ENCODE measurements at regions of chr14 and their contacts with region 1.

Region 1: DNA sequence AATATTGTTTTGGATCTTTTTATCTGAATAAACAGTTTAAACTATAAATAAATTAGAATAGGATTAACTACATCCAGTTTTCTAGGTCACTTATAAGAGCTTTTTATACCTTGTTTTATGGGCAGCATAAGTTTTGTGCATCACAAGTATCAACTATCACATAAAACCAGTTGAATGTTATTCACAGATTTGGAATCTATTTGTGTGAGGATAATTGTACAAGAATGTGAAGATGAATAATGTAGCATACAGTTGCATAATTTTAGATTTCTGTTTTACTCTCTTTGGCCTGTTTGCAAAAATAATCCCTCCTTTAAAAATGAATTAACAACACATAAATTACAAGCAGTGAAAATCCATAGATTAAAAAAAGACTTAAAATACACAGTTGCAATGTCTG is 88.8 kb downstream of the SCFD1 start:
- DNase-seq: no peak
- ATAC-seq: no peak
- H3K4me3 ChIP-seq: no peak overlapping the region
- H3K4me3 Mint-ChIP-seq: no peak overlapping the region
- H3K27ac ChIP-seq: no peak overlapping the region
- H3K27ac Mint-ChIP-seq: no peak overlapping the region
- H3K4me1 ChIP-seq: no peaks in the 10 kb centered on the region
- H3K4me1 Mint-ChIP-seq: no peaks in the 10 kb centered on the region
- H3K27me3 ChIP-seq: no peaks in the 10 kb centered on the region
- H3K27me3 Mint-ChIP-seq: no peaks in the 10 kb centered on the region

Region 2: DNA sequence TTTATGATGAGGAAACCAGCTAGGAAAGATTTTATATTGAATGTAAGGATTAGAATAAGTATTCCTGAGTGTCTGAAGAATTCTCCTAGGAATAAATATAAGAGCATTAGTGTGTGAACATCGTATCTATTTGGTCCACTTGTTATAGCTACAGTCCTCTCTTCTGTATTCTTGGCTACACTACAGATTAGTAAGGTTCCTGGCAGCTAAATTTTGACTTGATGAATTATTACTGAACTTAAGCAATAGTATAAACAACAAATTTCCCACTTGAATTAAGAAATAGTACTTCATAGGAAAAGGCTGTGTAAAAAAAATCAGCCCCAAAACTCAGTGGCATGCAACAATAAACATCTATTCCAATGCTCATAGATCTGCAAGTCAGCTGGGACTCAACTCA is 290.4 kb before region 1 on chr14:
- CTCF ChIA-PET with region 1: no interaction called
- POLR2A ChIA-PET with region 1: no interaction called
- intact Hi-C with region 1: loop called in 1 of 2 experiments (anchors 10 kb)
- DNase-seq: no peak
- ATAC-seq: no peak
- H3K4me3 ChIP-seq: no peak overlapping the region
- H3K4me3 Mint-ChIP-seq: no peak overlapping the region
- H3K27ac ChIP-seq: no peak overlapping the region
- H3K27ac Mint-ChIP-seq: no peak overlapping the region
- H3K4me1 ChIP-seq: no peaks in the 10 kb centered on the region
- H3K4me1 Mint-ChIP-seq: no peaks in the 10 kb centered on the region
- H3K27me3 ChIP-seq: peaks cover 0 to 4% of the 10 kb centered on the region in 2 donors
- H3K27me3 Mint-ChIP-seq: peaks cover 0 to 21% (median 17%) of the 10 kb centered on the region in 5 donors

Measured in naive thymus-derived CD4-positive, alpha-beta T cell (primary cell).